ENCODE measurements at regions of chr10 and their contacts with region 1.

Region 1: DNA sequence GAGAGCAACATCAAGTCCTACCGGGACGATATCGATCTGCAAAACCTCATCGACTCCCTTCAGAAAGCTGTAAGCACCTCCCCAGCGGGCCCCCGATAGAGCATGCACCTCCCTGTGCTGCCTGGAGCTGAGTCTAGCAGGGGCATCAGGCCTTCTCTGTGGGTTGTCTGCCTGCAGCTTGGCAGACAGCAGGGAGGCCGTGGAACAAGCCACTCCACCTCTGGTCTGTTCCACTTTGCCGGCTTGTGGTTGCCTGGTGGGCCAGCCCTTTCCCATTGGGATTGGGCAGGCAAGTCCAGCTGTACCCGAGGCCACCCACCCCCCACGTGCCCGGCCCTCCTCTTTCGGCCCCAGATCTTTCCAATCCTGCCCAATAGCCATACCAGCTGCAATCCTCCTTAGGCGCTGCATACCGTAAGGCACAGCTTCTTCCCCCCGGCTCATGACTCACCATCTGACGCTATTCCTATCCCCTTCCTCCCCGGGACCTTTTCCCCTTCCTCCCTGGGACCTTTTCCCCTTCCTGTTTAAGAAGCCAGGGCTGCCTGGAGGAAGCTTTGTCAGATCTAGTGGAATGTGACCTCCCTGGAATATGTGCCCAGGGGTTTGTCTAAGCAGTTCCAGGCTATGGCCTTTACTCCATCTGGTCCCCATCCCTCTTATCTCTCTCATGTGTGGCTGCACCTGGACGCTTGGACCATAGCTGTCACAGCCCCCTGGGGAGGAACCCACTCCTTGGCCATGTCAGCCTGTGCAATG is 28.1 kb upstream of the SH2D4B start:
- DNase-seq: no peak
- ATAC-seq: no peak
- H3K4me3 ChIP-seq: no peak overlapping the region
- H3K4me3 Mint-ChIP-seq: no peak overlapping the region
- H3K27ac ChIP-seq: no peak overlapping the region
- H3K27ac Mint-ChIP-seq: peak overlapping the region; percentile 2
- H3K4me1 ChIP-seq: peaks cover 42% of the 10 kb centered on the region
- H3K4me1 Mint-ChIP-seq: peaks cover 41% of the 10 kb centered on the region
- H3K27me3 ChIP-seq: no peaks in the 10 kb centered on the region
- H3K27me3 Mint-ChIP-seq: no peaks in the 10 kb centered on the region
- CTCF ChIP-seq: no peak

Region 2: GRCh38 chr10:80382989-80383388 is 126.6 kb before region 1 on chr10:
- CTCF ChIA-PET with region 1: interaction called, 36 read pairs
- POLR2A ChIA-PET with region 1: interaction called, 16 read pairs
- intact Hi-C with region 1: loop called (anchors 1 kb)
- DNase-seq: peak; percentile 29 to 76 (median 44)
- ATAC-seq: peak; percentile 63
- H3K4me3 ChIP-seq: no peak overlapping the region
- H3K4me3 Mint-ChIP-seq: no peak overlapping the region
- H3K27ac ChIP-seq: no peak overlapping the region
- H3K27ac Mint-ChIP-seq: peak overlapping the region; percentile 3
- H3K4me1 ChIP-seq: peaks cover 10% of the 10 kb centered on the region
- H3K4me1 Mint-ChIP-seq: peaks cover 25% of the 10 kb centered on the region
- H3K27me3 ChIP-seq: no peaks in the 10 kb centered on the region
- H3K27me3 Mint-ChIP-seq: no peaks in the 10 kb centered on the region
- CTCF ChIP-seq: peak; percentile 92

Region 3: DNA sequence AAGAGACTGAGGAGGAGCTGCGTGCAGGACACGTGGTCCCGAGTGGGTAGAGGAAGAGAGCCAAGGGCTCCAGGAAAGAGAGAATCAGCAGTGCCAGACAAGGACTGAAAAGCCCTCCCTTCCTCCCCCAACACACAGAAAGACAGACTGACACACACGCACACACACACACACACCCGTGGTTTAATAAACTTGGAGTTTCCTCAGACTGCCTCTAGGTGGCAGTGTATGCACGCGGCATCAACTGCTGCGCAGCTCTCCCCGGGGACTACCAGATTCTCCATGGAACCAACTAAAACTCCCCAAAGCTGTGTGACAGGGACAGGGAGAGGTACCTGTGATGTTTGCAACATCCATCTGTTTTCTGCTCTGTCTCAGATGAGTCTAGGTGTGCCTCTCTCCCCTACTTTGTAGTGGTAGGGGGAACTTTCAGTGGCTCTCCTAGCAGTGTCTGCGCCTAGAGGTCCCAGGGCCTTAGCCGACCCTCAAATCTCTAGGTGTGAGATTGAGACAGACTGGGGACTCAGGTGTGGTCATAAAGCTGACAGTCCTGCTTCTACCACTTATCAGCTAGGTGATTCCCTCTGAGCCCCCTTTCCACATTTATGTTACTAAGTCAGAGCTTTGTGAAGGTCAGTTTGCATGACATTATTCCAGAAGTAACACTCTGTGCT is 64.8 kb before region 1 on chr10:
- CTCF ChIA-PET with region 1: interaction called, 147 read pairs
- POLR2A ChIA-PET with region 1: interaction called, 36 read pairs
- intact Hi-C with region 1: loop called (anchors 1 kb)
- DNase-seq: peak in 12 of 14 experiments; percentile 39 to 92 (median 67)
- ATAC-seq: peak; percentile 82
- H3K4me3 ChIP-seq: no peak overlapping the region
- H3K4me3 Mint-ChIP-seq: no peak overlapping the region
- H3K27ac ChIP-seq: no peak overlapping the region
- H3K27ac Mint-ChIP-seq: peak overlapping the region; percentile 84
- H3K4me1 ChIP-seq: peaks cover 23% of the 10 kb centered on the region
- H3K4me1 Mint-ChIP-seq: peaks cover 51% of the 10 kb centered on the region
- H3K27me3 ChIP-seq: no peaks in the 10 kb centered on the region
- H3K27me3 Mint-ChIP-seq: no peaks in the 10 kb centered on the region
- CTCF ChIP-seq: peak; percentile 65

Region 4: DNA sequence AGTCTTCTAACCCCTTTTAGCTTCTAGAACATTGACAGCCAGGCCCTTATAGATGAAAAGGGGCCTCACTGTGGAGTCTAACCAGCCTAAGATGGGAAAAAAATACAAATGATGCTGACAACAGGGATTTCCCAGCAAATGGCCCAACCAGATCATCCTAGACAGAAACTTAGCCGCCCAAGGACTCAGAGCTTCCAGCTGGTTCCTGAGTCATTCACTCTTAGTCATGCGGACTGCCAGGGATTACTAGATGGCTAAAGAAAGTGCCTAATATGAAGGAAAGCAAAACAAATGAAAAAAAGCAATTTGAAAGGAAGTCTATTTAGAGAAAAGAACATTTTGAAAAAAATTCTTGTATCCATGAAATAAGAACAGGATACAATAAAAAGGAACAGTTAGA is 31.8 kb before region 1 on chr10:
- CTCF ChIA-PET with region 1: interaction called, 250 read pairs
- POLR2A ChIA-PET with region 1: interaction called, 302 read pairs
- intact Hi-C with region 1: no loop called
- DNase-seq: peak in 1 of 14 experiments; percentile 59
- ATAC-seq: no peak
- H3K4me3 ChIP-seq: no peak overlapping the region
- H3K4me3 Mint-ChIP-seq: peak overlapping the region; percentile 49
- H3K27ac ChIP-seq: no peak overlapping the region
- H3K27ac Mint-ChIP-seq: peak overlapping the region; percentile 92
- H3K4me1 ChIP-seq: peaks cover 73% of the 10 kb centered on the region
- H3K4me1 Mint-ChIP-seq: peaks cover 84% of the 10 kb centered on the region
- H3K27me3 ChIP-seq: no peaks in the 10 kb centered on the region
- H3K27me3 Mint-ChIP-seq: no peaks in the 10 kb centered on the region
- CTCF ChIP-seq: no peak

Region 5: GRCh38 chr10:80493522-80494051 is 16.0 kb before region 1 on chr10:
- CTCF ChIA-PET with region 1: interaction called, 55 read pairs
- POLR2A ChIA-PET with region 1: interaction called, 158 read pairs
- intact Hi-C with region 1: no loop called
- DNase-seq: peak in 4 of 14 experiments; percentile 49 to 65 (median 62)
- ATAC-seq: peak; percentile 74
- H3K4me3 ChIP-seq: no peak overlapping the region
- H3K4me3 Mint-ChIP-seq: peak overlapping the region; percentile 62
- H3K27ac ChIP-seq: peak overlapping the region; percentile 10 to 30
- H3K27ac Mint-ChIP-seq: peak overlapping the region; percentile 78
- H3K4me1 ChIP-seq: peaks cover 84% of the 10 kb centered on the region
- H3K4me1 Mint-ChIP-seq: peaks cover 99% of the 10 kb centered on the region
- H3K27me3 ChIP-seq: no peaks in the 10 kb centered on the region
- H3K27me3 Mint-ChIP-seq: no peaks in the 10 kb centered on the region
- CTCF ChIP-seq: no peak

Region 6: GRCh38 chr10:80524190-80524909 is 14.8 kb after region 1 on chr10:
- CTCF ChIA-PET with region 1: interaction called, 11 read pairs
- POLR2A ChIA-PET with region 1: interaction called, 5 read pairs
- intact Hi-C with region 1: no loop called
- DNase-seq: no peak
- ATAC-seq: no peak
- H3K4me3 ChIP-seq: no peak overlapping the region
- H3K4me3 Mint-ChIP-seq: no peak overlapping the region
- H3K27ac ChIP-seq: no peak overlapping the region
- H3K27ac Mint-ChIP-seq: peak overlapping the region; percentile 81
- H3K4me1 ChIP-seq: peaks cover 57% of the 10 kb centered on the region
- H3K4me1 Mint-ChIP-seq: peaks cover 67% of the 10 kb centered on the region
- H3K27me3 ChIP-seq: no peaks in the 10 kb centered on the region
- H3K27me3 Mint-ChIP-seq: no peaks in the 10 kb centered on the region
- CTCF ChIP-seq: no peak

Measured in CD4-positive, alpha-beta T cell (primary cell).